AG04450 (cell line): ENCODE measurements at regions of chr14 and their contacts with region 1.

Region 1: DNA sequence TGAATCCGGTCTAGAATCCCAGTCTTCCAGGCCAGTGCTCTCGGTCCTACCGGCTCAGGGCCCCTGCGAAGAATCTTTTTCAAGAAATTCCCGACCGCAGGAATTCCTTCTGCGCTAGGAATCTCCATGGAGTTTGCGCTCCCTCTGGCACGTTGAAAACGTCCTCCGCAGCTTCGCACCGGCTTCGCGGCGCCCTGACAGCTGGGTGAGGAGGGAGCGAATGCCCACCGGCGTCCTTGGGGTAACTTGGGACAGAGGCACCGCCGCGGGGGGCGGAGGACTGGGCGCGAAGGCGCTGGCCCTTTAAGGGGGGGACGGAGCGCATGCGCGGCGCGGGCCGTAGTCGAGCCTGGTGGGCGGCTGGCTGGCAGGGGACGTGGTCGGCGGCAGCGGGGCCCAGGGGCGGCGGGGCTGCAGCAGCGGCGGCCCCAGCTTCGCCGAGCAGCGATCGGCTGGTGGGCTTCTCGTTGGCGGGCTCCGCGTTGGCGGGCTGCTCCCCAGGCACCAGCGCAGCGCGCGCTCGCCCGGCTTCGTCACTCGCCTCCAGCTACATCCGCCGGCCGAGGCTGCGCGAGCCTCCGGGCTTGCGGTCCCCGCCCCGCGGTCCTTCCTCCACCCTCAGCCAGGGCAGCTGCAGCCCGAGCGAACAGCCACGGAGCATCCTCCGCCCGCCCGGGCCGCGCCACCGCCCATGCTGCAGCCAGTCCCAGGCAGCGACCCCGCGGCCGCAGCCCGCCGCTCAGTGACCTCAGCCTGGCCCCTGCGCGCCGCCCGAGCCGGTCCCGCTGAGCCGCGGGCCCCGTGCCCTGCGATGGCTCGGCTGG is at the start of gene VASH1:
- DNase-seq: peak; percentile 29
- H3K4me3 ChIP-seq: peak within 1 kb of the TSS; percentile 73
- H3K27ac ChIP-seq: peak within 1 kb of the TSS; percentile 3
- H3K27me3 ChIP-seq: no peaks in the 10 kb centered on the region
- CTCF ChIP-seq: no peak
- polyA plus RNA-seq, gene VASH1: 5.0 and 6.0 TPM in 2 replicates

Region 2: GRCh38 chr14:76793956-76794355 is 32.6 kb after region 1 on chr14:
- CTCF ChIA-PET with region 1: interaction called, 11 read pairs
- POLR2A ChIA-PET with region 1: no interaction called
- DNase-seq: no peak
- H3K4me3 ChIP-seq: no peak overlapping the region
- H3K27ac ChIP-seq: no peak overlapping the region
- H3K27me3 ChIP-seq: no peaks in the 10 kb centered on the region
- CTCF ChIP-seq: no peak